OCI-LY7 (cell line): ENCODE measurements at regions of chr9 and their contacts with region 1.

Region 1: DNA sequence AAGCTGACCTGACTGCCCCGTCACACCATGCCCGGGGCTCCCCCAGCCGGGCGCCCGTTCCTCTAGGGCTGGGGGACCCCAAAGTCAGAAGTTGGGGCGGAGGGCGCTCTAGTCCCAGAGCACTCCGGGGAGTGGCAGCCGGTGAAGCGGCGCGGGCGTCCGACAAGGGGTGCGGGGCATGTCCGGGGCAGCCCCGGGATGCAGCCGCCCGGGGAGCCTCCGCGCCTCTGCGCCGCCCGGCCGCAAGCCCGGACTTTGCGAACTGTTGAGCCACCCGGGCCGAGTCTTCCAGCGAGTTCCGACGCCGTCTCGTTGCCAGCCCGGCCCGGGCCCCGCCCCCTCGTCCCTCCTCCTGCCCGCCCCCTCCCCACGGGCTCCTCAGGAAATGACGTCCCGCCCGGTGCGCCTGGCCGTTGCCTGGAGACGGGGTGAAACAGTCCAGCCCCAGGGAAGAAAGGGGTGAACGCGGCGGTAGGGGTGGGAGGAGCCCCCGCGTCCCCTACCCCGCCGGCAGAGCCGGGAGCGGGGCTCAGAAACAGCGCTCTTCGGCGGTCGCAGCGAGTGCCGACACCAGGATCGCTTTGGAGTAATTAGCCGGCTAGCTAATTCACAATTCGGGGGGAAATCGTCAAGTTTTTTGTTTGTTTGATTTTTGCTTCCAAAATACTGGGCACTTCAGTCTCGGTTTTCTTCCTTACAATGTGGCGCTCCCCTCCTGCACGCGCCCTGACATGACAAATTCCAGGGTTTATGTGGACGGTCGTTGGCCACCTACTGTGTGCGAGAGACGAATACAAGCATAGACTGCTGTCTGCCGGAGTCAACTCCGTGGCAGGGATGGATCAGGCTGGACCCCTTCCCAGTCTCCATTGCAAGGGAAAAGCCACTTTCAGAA is at the start of gene WHRN:
- DNase-seq: peak; percentile 82
- H3K4me3 ChIP-seq: peak within 1 kb of the TSS; percentile 66
- H3K27ac ChIP-seq: no peak within 1 kb of the TSS
- H3K4me1 ChIP-seq: peaks cover 28% of the 10 kb centered on the region
- CTCF ChIP-seq: no peak
- total RNA-seq, gene WHRN: 0.19 TPM in 1 of 2 replicates, not detected in the other

Region 2: GRCh38 chr9:114434878-114435311 is 70.5 kb before region 1 on chr9:
- CTCF ChIA-PET with region 1: no interaction called
- POLR2A ChIA-PET with region 1: no interaction called
- intact Hi-C with region 1: loop called (anchors 1 kb)
- DNase-seq: peak; percentile 57
- H3K4me3 ChIP-seq: no peak overlapping the region
- H3K27ac ChIP-seq: no peak overlapping the region
- H3K4me1 ChIP-seq: peaks cover 9% of the 10 kb centered on the region
- CTCF ChIP-seq: peak; percentile 78

Region 3: GRCh38 chr9:114487607-114488300 is 17.7 kb before region 1 on chr9:
- CTCF ChIA-PET with region 1: interaction called, 6 read pairs
- POLR2A ChIA-PET with region 1: interaction called, 4 read pairs
- intact Hi-C with region 1: loop called (anchors 1 kb)
- DNase-seq: peak; percentile 77
- H3K4me3 ChIP-seq: no peak overlapping the region
- H3K27ac ChIP-seq: no peak overlapping the region
- H3K4me1 ChIP-seq: no peaks in the 10 kb centered on the region
- CTCF ChIP-seq: peak; percentile 93